GM12878 (cell line): ENCODE measurements at regions of chr5 and their contacts with region 1.

Region 1: GRCh38 chr5:18699681-18700080 is 1065.4 kb downstream of the TAF11L14 start:
- DNase-seq: no peak
- ATAC-seq: no peak
- H3K4me3 ChIP-seq: no peak overlapping the region
- H3K27ac ChIP-seq: no peak overlapping the region
- H3K4me1 ChIP-seq: peaks cover 10% of the 10 kb centered on the region
- H3K27me3 ChIP-seq: no peaks in the 10 kb centered on the region
- CTCF ChIP-seq: no peak
- EP300 ChIP-seq: no peak
- POLR2A ChIP-seq: no peak
- RAD21 ChIP-seq: no peak

Region 2: DNA sequence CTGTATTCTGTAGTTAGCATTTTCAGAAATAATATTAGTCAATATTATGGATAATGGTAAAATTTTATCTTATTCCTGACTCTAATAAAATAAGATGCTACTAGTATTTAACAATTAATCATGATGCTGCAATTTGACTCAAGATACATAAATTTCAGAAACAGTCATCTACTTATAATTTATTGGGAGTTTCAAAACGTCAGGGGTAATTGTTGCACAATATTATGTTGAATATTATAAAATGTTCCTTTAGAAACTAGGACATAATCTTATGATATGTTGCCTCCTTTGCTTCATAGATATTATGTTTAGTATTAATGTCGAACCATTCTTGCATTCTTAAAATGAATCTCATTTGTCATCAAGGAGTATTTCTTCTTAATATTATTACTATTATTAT is 924.9 kb before region 1 on chr5:
- CTCF ChIA-PET with region 1: no interaction called
- POLR2A ChIA-PET with region 1: no interaction called
- RAD21 ChIA-PET with region 1: no interaction called
- SMC1A ChIA-PET with region 1: no interaction called
- in situ Hi-C with region 1: no loop called
- intact Hi-C with region 1: no loop called
- DNase-seq: no peak
- ATAC-seq: no peak
- H3K4me3 ChIP-seq: no peak overlapping the region
- H3K27ac ChIP-seq: no peak overlapping the region
- H3K4me1 ChIP-seq: no peaks in the 10 kb centered on the region
- H3K27me3 ChIP-seq: no peaks in the 10 kb centered on the region
- CTCF ChIP-seq: no peak
- EP300 ChIP-seq: no peak
- POLR2A ChIP-seq: no peak
- RAD21 ChIP-seq: no peak

Region 3: GRCh38 chr5:18393589-18394442 is 305.9 kb before region 1 on chr5:
- CTCF ChIA-PET with region 1: interaction called, 20 read pairs
- POLR2A ChIA-PET with region 1: no interaction called
- RAD21 ChIA-PET with region 1: interaction called, 12 read pairs
- SMC1A ChIA-PET with region 1: no interaction called
- in situ Hi-C with region 1: loop called (anchors 10 kb)
- intact Hi-C with region 1: loop called (anchors 1 kb)
- DNase-seq: no peak
- ATAC-seq: peak; percentile 80
- H3K4me3 ChIP-seq: no peak overlapping the region
- H3K27ac ChIP-seq: no peak overlapping the region
- H3K4me1 ChIP-seq: no peaks in the 10 kb centered on the region
- H3K27me3 ChIP-seq: no peaks in the 10 kb centered on the region
- CTCF ChIP-seq: peak; percentile 81 to 92 (median 83)
- EP300 ChIP-seq: no peak
- POLR2A ChIP-seq: no peak
- RAD21 ChIP-seq: peak; percentile 86

Region 4: GRCh38 chr5:18465833-18466591 is 233.7 kb before region 1 on chr5:
- CTCF ChIA-PET with region 1: interaction called, 39 read pairs
- POLR2A ChIA-PET with region 1: no interaction called
- RAD21 ChIA-PET with region 1: interaction called, 17 read pairs
- SMC1A ChIA-PET with region 1: interaction called, 27 read pairs
- in situ Hi-C with region 1: loop called (anchors 5 kb)
- intact Hi-C with region 1: loop called (anchors 1 kb)
- DNase-seq: peak; percentile 17
- ATAC-seq: peak; percentile 97
- H3K4me3 ChIP-seq: no peak overlapping the region
- H3K27ac ChIP-seq: no peak overlapping the region
- H3K4me1 ChIP-seq: no peaks in the 10 kb centered on the region
- H3K27me3 ChIP-seq: no peaks in the 10 kb centered on the region
- CTCF ChIP-seq: peak; percentile 67 to 83 (median 72)
- EP300 ChIP-seq: no peak
- POLR2A ChIP-seq: no peak
- RAD21 ChIP-seq: peak; percentile 92

Region 5: DNA sequence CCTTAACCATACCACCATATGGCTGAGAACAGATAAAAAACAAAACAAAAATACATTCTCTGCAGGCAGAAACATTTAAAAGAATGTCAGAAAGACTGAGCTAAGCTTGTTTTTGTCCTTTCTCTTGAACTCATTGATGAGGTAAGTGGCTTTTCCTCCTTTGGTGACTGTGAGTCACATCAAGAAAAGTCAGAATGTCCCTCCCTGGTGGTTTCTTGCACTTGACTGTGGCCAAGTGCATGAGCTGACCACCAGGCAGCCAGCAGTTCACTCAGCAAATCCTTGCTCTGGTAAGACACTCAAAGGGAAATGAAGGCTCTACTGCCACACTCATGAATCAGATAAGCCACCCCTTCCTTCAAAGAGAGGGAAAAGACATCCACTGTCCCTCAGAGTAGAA is 94.5 kb before region 1 on chr5:
- CTCF ChIA-PET with region 1: no interaction called
- POLR2A ChIA-PET with region 1: no interaction called
- RAD21 ChIA-PET with region 1: no interaction called
- SMC1A ChIA-PET with region 1: no interaction called
- in situ Hi-C with region 1: no loop called
- intact Hi-C with region 1: no loop called
- DNase-seq: no peak
- ATAC-seq: peak; percentile 69
- H3K4me3 ChIP-seq: no peak overlapping the region
- H3K27ac ChIP-seq: no peak overlapping the region
- H3K4me1 ChIP-seq: no peaks in the 10 kb centered on the region
- H3K27me3 ChIP-seq: no peaks in the 10 kb centered on the region
- CTCF ChIP-seq: no peak
- EP300 ChIP-seq: no peak
- POLR2A ChIP-seq: no peak
- RAD21 ChIP-seq: no peak

Region 6: DNA sequence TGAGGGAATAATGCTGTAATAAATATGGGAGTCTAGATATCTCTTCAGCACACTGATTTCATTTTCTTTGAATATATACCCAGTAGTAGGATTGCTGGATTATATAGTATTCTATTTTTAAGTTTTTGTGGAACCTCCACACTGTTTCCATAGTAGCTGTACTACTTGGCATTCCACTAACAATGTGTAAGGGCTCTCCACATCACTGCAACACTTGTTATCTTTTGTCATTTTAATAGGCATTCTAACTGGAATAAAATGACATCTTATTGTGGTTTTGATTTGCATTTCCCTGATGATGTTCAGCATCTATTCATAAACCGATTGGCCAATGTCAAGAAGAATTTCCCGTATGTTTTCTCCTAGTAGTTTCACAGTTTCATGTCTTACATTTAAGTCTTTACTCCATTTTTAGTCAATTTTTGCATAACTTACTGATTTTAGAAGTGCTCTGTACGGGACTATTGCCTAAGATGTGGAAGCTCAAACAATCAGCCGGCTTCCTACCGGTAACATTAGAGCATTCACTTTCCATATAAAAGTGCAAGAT is 13.3 kb after region 1 on chr5:
- CTCF ChIA-PET with region 1: interaction called, 10 read pairs
- POLR2A ChIA-PET with region 1: no interaction called
- RAD21 ChIA-PET with region 1: interaction called, 3 read pairs
- SMC1A ChIA-PET with region 1: interaction called, 11 read pairs
- in situ Hi-C with region 1: no loop called
- intact Hi-C with region 1: no loop called
- DNase-seq: no peak
- ATAC-seq: no peak
- H3K4me3 ChIP-seq: no peak overlapping the region
- H3K27ac ChIP-seq: no peak overlapping the region
- H3K4me1 ChIP-seq: no peaks in the 10 kb centered on the region
- H3K27me3 ChIP-seq: no peaks in the 10 kb centered on the region
- CTCF ChIP-seq: no peak
- EP300 ChIP-seq: no peak
- POLR2A ChIP-seq: no peak
- RAD21 ChIP-seq: no peak

Region 7: GRCh38 chr5:18740301-18740700 is 40.6 kb after region 1 on chr5:
- CTCF ChIA-PET with region 1: interaction called, 11 read pairs
- POLR2A ChIA-PET with region 1: no interaction called
- RAD21 ChIA-PET with region 1: interaction called, 33 read pairs
- SMC1A ChIA-PET with region 1: interaction called, 24 read pairs
- in situ Hi-C with region 1: no loop called
- intact Hi-C with region 1: no loop called
- DNase-seq: no peak
- ATAC-seq: peak; percentile 14; the same call in 2 of the 3 replicates
- H3K4me3 ChIP-seq: 0 out of 2 replicates have a peak overlapping the region, but pooled peaks have one; percentile 19
- H3K27ac ChIP-seq: no peak overlapping the region
- H3K4me1 ChIP-seq: peaks cover 3% of the 10 kb centered on the region; the same call in 1 of the 2 replicates
- H3K27me3 ChIP-seq: no peaks in the 10 kb centered on the region
- CTCF ChIP-seq: no peak
- EP300 ChIP-seq: no peak
- POLR2A ChIP-seq: no peak
- RAD21 ChIP-seq: no peak

Region 8: DNA sequence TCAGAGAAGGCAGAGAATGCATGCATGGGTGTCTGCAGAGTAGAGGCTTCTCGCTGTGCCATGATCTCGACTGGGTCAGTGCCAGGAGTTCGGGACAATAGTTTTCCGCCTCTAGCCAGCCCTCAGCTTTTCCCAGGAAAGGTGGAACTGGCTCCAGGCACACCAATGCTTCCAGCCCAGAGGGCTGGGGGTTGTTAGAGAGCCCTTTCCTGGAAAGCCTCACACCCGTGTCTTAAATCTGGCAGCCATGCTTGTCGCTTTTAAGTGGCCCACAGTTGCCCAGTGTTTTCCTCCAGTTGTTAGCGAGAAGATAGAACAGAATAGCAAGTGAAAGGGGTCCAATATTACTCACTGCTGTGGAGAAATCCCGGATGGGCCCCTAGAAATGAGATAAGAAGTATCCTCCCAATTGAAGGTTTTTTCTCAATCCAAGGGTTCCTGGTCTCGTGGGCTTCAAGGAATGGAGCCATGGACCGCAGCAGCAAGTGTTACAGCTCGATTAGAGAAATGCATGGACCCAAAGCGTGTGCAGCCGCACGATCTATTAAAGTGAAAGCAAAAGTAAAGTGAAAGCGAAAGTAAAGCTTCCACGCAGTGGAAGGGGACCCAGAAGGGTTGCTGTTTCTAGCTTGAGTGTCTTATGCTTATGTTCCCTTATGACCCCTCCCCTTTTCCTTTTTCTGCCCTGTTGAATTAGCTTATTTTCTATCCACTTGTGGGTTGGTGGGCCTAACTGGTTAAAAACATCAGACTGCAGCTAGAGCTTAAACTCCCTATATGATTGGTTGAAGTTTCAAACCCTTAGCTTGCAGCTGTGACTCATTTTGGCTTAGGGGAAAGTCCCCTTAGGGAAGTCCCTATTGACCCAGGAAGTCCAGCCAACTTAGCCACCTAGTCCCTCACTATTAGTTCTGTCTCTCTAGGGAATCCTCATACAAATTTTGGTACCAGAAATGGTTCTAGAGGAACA is 46.2 kb after region 1 on chr5:
- CTCF ChIA-PET with region 1: interaction called, 13 read pairs
- POLR2A ChIA-PET with region 1: no interaction called
- RAD21 ChIA-PET with region 1: interaction called, 33 read pairs
- SMC1A ChIA-PET with region 1: interaction called, 24 read pairs
- in situ Hi-C with region 1: no loop called
- intact Hi-C with region 1: loop called (anchors 1 kb)
- DNase-seq: peak; percentile 89
- ATAC-seq: peak; percentile 75
- H3K4me3 ChIP-seq: peak overlapping the region; percentile 84
- H3K27ac ChIP-seq: peak overlapping the region; percentile 82
- H3K4me1 ChIP-seq: peaks cover 24% of the 10 kb centered on the region
- H3K27me3 ChIP-seq: no peaks in the 10 kb centered on the region
- CTCF ChIP-seq: no peak
- EP300 ChIP-seq: peak in 1 of 2 experiments; percentile 48; a peak in 1 of 4 replicates
- POLR2A ChIP-seq: peak; percentile 49
- RAD21 ChIP-seq: no peak